Activated CD4-positive, alpha-beta T cell treated with anti-CD3 and anti-CD28 coated beads, Interleukin-2, amount 10 ng/mL, durations not matched to agents 24 days and 14 days (primary cell): ENCODE measurements at regions of chr3 and their contacts with region 1.

Region 1: DNA sequence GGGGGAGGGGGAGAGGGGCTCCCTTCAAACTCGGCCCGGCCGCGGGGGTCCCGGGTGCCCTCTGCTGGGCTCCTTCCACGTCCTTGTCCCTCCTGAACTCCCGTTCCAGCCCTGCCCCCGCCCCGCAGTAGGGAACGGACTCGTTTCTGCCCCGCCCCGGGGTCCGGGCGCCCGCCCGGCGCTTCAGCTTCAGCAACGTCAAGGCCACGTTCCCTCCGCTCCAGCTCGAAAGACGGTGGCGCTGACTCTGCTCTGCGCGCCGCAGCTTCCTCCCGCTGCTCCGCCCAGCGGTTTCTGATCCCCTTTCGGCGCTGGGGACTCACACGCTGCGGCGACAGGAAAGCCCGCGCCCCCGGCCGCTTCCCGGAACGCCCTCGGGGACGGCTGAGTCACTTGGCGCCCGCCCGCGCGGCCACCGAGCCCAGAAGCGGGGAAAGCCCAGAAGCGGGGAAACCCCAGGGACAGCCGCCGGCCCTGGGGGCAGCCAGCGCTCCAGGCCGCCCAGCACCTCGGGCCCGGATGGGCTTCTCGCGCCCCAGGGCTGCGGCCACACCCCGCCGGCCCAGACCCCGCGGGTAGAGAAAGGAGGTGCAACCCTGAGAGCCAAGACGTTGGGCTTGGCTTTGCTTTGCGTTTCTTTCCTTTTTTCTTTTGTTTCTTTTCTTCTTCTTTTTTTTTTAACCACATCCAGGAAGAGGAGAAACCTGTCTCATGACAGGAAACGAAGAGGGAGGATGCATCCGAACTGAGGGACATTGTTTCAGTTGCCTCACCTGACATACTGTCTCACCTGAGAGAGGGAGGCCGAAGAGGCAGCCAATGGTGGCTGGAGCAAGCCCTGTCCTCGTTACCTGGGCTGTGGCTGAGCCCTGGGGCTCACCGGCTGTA is 28.9 kb downstream of the ARHGAP31 start:
- DNase-seq: peak; percentile 97
- H3K4me3 Mint-ChIP-seq: peak overlapping the region; percentile 82
- H3K27ac Mint-ChIP-seq: peak overlapping the region; percentile 93
- H3K4me1 Mint-ChIP-seq: peaks cover 38% of the 10 kb centered on the region
- H3K27me3 Mint-ChIP-seq: peaks cover 25% of the 10 kb centered on the region

Region 2: DNA sequence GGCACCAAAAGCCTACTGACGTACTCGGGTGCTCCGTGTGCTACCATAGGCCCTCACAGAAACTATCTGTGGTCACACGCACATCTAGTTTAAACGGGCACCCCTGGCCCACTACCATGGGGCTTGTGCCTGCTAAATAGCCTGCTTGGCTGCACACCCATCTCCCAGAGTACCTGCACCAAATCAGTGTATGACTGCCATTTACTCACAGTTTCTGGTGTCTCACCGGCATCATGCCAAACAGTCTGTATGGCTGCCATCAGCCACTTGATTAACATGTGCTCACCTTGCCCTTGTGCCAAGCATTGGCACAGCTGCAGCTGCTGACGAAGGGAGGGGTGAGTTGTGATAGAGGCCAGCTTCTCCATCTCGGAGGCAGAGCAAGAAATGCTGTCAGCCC is 521.2 kb before region 1 on chr3:
- intact Hi-C with region 1: no loop called
- DNase-seq: no peak
- H3K4me3 Mint-ChIP-seq: no peak overlapping the region
- H3K27ac Mint-ChIP-seq: no peak overlapping the region
- H3K4me1 Mint-ChIP-seq: no peaks in the 10 kb centered on the region
- H3K27me3 Mint-ChIP-seq: no peaks in the 10 kb centered on the region

Region 3: GRCh38 chr3:119069725-119070124 is 253.4 kb before region 1 on chr3:
- intact Hi-C with region 1: no loop called
- DNase-seq: no peak
- H3K4me3 Mint-ChIP-seq: no peak overlapping the region
- H3K27ac Mint-ChIP-seq: no peak overlapping the region
- H3K4me1 Mint-ChIP-seq: no peaks in the 10 kb centered on the region
- H3K27me3 Mint-ChIP-seq: peaks cover 2% of the 10 kb centered on the region

Region 4: GRCh38 chr3:119240591-119241434 is 82.3 kb before region 1 on chr3 and contains the start of gene B4GALT4:
- intact Hi-C with region 1: loop called (anchors 1 kb)
- DNase-seq: peak; percentile 94
- H3K4me3 Mint-ChIP-seq: peak within 1 kb of the TSS; percentile 88
- H3K27ac Mint-ChIP-seq: peak within 1 kb of the TSS; percentile 82
- H3K4me1 Mint-ChIP-seq: peaks cover 34% of the 10 kb centered on the region
- H3K27me3 Mint-ChIP-seq: no peaks in the 10 kb centered on the region
- total RNA-seq, gene B4GALT4: 14.8 and 15.5 TPM in 2 replicates

Region 5: GRCh38 chr3:119293871-119294695 is 29.0 kb before region 1 on chr3 and contains the start of gene ARHGAP31:
- intact Hi-C with region 1: loop called (anchors 1 kb)
- DNase-seq: peak; percentile 95
- H3K4me3 Mint-ChIP-seq: peak within 1 kb of the TSS; percentile 86
- H3K27ac Mint-ChIP-seq: peak within 1 kb of the TSS; percentile 89
- H3K4me1 Mint-ChIP-seq: peaks cover 37% of the 10 kb centered on the region
- H3K27me3 Mint-ChIP-seq: peaks cover 14% of the 10 kb centered on the region
- total RNA-seq, gene ARHGAP31: 9.5 and 11.0 TPM in 2 replicates

Region 6: GRCh38 chr3:119352849-119353502 is 29.9 kb after region 1 on chr3:
- intact Hi-C with region 1: loop called (anchors 2 kb)
- DNase-seq: peak; percentile 60
- H3K4me3 Mint-ChIP-seq: peak overlapping the region; percentile 14
- H3K27ac Mint-ChIP-seq: no peak overlapping the region
- H3K4me1 Mint-ChIP-seq: peaks cover 22% of the 10 kb centered on the region
- H3K27me3 Mint-ChIP-seq: peaks cover 5% of the 10 kb centered on the region

Region 7: GRCh38 chr3:119380697-119381096 is 57.6 kb after region 1 on chr3:
- intact Hi-C with region 1: no loop called
- DNase-seq: no peak
- H3K4me3 Mint-ChIP-seq: no peak overlapping the region
- H3K27ac Mint-ChIP-seq: no peak overlapping the region
- H3K4me1 Mint-ChIP-seq: no peaks in the 10 kb centered on the region
- H3K27me3 Mint-ChIP-seq: no peaks in the 10 kb centered on the region

Region 8: GRCh38 chr3:119463171-119464169 is 140.4 kb after region 1 on chr3 and contains the start of gene TMEM39A:
- intact Hi-C with region 1: loop called (anchors 1 kb)
- DNase-seq: peak; percentile 100
- H3K4me3 Mint-ChIP-seq: peak within 1 kb of the TSS; percentile 99
- H3K27ac Mint-ChIP-seq: peak within 1 kb of the TSS; percentile 96
- H3K4me1 Mint-ChIP-seq: peaks cover 30% of the 10 kb centered on the region
- H3K27me3 Mint-ChIP-seq: peaks cover 2% of the 10 kb centered on the region
- total RNA-seq, gene TMEM39A: 44.0 and 52.2 TPM in 2 replicates

Region 9: DNA sequence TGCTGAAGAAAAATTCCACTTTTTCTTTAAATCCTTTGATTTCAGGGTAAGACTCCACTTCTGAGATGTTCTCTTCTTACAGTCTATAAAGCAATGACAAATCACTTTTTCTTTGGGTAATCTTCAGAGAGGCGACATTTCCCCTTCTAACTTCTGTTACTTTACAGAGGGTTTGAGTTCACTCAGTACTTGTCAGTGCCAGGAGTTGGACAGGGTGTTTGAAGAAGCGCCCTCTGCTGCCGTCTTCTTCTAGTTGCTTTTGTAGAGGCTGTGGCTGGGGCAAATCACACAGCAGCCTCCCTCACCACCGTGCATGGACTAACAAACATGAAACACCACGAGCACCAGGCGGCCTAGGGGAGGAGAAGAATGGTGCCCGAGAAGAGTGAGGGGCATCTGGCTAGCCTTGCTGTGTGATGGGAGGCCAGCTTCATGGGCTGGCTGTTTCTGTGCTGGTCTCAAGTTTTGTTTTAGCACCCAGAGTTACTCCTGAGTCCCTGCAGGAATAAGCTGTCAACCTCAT is 236.4 kb after region 1 on chr3 and contains the start of gene CD80:
- intact Hi-C with region 1: loop called (anchors 1 kb)
- DNase-seq: peak; percentile 92
- H3K4me3 Mint-ChIP-seq: peak within 1 kb of the TSS; percentile 80
- H3K27ac Mint-ChIP-seq: peak within 1 kb of the TSS; percentile 77
- H3K4me1 Mint-ChIP-seq: peaks cover 53% of the 10 kb centered on the region
- H3K27me3 Mint-ChIP-seq: no peaks in the 10 kb centered on the region
- total RNA-seq, gene CD80: 12.5 and 13.0 TPM in 2 replicates

Region 10: DNA sequence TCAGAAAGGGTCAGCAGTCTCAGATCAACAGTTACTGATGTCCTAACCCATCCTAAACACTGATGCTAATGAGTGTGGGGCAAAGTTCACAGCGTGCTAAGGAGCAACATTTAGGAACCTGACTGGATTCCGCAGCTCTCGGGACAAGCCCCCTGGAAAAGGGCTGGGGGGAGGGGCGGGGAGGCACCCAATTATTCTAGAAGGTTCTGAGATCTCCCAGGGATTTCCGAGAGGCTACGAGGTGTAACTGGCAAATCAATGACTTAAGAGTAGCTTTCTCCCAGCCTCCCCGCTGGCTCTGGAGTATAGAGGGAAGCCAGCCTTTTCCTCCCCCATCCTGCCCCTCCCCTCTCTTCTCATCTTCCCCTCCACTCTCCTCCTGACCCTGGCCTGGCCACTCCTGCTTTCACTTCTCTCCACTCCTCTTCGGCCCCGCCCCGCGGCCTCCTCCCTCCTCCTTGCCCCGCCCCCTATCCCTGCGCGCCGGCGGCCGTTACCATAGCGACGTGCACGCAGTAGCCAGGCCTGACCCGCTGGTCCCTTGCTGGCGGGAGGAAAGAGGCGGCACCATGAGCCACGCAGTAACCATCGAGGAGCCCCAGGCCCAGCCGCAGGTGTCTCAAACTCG is 379.6 kb after region 1 on chr3 and contains the start of gene CFAP91:
- intact Hi-C with region 1: loop called (anchors 1 kb)
- DNase-seq: peak; percentile 94
- H3K4me3 Mint-ChIP-seq: peak within 1 kb of the TSS; percentile 83
- H3K27ac Mint-ChIP-seq: peak within 1 kb of the TSS; percentile 40
- H3K4me1 Mint-ChIP-seq: peaks cover 29% of the 10 kb centered on the region
- H3K27me3 Mint-ChIP-seq: peaks cover 27% of the 10 kb centered on the region
- total RNA-seq, gene CFAP91: 0.26 TPM in 1 of 2 replicates, not detected in the other